ENCODE measurements at regions of chr10 and their contacts with region 1.

Region 1: DNA sequence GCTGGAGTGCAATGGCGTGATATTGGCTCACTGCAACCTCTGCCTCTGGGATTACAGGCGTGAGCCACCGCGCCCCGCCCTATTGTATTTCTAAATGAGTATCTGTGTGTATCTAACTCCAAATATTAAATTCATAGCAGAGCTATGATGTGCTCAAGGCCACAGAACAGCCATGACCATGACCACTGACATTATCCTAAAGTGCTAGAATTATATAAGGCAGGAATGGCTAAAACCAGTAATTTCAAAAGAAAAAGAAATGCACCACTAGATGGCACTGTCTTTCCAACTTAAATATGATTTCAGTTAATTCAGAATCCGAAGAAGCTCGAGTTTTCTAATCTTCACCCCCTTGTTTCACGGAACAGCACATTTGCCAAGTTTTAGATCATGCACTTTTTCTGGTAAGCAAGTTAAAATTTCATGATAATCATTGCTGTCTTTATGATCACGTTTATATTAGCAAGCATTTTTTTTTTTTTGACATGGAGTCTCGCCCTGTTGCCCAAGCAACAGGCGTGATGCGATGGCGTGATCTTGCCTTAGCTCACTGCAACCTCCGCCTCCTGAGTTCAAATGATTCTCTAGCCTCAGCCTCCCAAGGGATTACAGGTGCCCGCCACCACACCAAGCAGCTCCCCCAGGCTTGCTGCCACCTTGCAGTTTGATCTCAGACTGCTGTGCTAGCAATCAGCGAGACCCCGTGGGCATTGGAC is 65.3 kb downstream of the OR13A1 start:
- DNase-seq: peak in 3 of 4 experiments; percentile 13 to 75 (median 43)
- ATAC-seq: peak; percentile 83
- H3K4me3 ChIP-seq: peak overlapping the region; percentile 19; the same call in 1 of the 2 replicates
- H3K27ac ChIP-seq: no peak overlapping the region
- H3K4me1 ChIP-seq: peaks cover 0 to 5% of the 10 kb centered on the region in 2 experiments; a peak in 2 of 5 replicates
- H3K27me3 ChIP-seq: no peaks in the 10 kb centered on the region
- CTCF ChIP-seq: peak; percentile 36 to 77 (median 64); a peak in 5 of 6 replicates
- EP300 ChIP-seq: no peak
- POLR2A ChIP-seq: no peak
- RAD21 ChIP-seq: peak; percentile 83 to 86

Region 2: GRCh38 chr10:45308707-45309106 is 58.6 kb after region 1 on chr10:
- CTCF ChIA-PET with region 1: no interaction called
- POLR2A ChIA-PET with region 1: interaction called, 3 read pairs
- in situ Hi-C with region 1: no loop called
- intact Hi-C with region 1: loop called (anchors 2 kb)
- DNase-seq: peak in 2 of 4 experiments; percentile 41 to 70
- ATAC-seq: peak; percentile 93
- H3K4me3 ChIP-seq: no peak overlapping the region
- H3K27ac ChIP-seq: no peak overlapping the region
- H3K4me1 ChIP-seq: peaks cover 3 to 10% of the 10 kb centered on the region in 2 experiments; a peak in 4 of 5 replicates
- H3K27me3 ChIP-seq: no peaks in the 10 kb centered on the region
- CTCF ChIP-seq: peak; percentile 50 to 80 (median 68)
- EP300 ChIP-seq: no peak
- POLR2A ChIP-seq: no peak
- RAD21 ChIP-seq: peak; percentile 70 to 76

Region 3: GRCh38 chr10:45373576-45374349 is 123.6 kb after region 1 on chr10 and contains the start of gene ALOX5:
- CTCF ChIA-PET with region 1: no interaction called
- POLR2A ChIA-PET with region 1: interaction called, 3 read pairs
- in situ Hi-C with region 1: no loop called
- intact Hi-C with region 1: loop called (anchors 10 kb)
- DNase-seq: peak; percentile 89 to 97 (median 95)
- ATAC-seq: peak; percentile 92
- H3K4me3 ChIP-seq: peak within 1 kb of the TSS; percentile 40
- H3K27ac ChIP-seq: no peak within 1 kb of the TSS
- H3K4me1 ChIP-seq: peaks cover 30 to 34% of the 10 kb centered on the region in 2 experiments
- H3K27me3 ChIP-seq: peaks cover 0 to 14% of the 10 kb centered on the region in 2 experiments; a peak in 3 of 5 replicates
- CTCF ChIP-seq: no peak
- EP300 ChIP-seq: no peak
- POLR2A ChIP-seq: 0 out of 2 replicates have a peak, but pooled peaks have one; percentile 37
- RAD21 ChIP-seq: 0 out of 4 replicates have a peak, but pooled peaks of 1 of the 2 experiments have one; percentile 10
- polyA plus RNA-seq, gene ALOX5: 0.10 to 0.13 TPM

Region 4: GRCh38 chr10:45447416-45447815 is 197.3 kb after region 1 on chr10:
- CTCF ChIA-PET with region 1: no interaction called
- POLR2A ChIA-PET with region 1: no interaction called
- in situ Hi-C with region 1: no loop called
- intact Hi-C with region 1: no loop called
- DNase-seq: no peak
- ATAC-seq: no peak
- H3K4me3 ChIP-seq: no peak overlapping the region
- H3K27ac ChIP-seq: no peak overlapping the region
- H3K4me1 ChIP-seq: peaks cover 0 to 20% of the 10 kb centered on the region in 2 experiments; a peak in 2 of 5 replicates
- H3K27me3 ChIP-seq: no peaks in the 10 kb centered on the region; a peak in 1 of 5 replicates
- CTCF ChIP-seq: no peak
- EP300 ChIP-seq: no peak
- POLR2A ChIP-seq: no peak
- RAD21 ChIP-seq: no peak

Region 5: DNA sequence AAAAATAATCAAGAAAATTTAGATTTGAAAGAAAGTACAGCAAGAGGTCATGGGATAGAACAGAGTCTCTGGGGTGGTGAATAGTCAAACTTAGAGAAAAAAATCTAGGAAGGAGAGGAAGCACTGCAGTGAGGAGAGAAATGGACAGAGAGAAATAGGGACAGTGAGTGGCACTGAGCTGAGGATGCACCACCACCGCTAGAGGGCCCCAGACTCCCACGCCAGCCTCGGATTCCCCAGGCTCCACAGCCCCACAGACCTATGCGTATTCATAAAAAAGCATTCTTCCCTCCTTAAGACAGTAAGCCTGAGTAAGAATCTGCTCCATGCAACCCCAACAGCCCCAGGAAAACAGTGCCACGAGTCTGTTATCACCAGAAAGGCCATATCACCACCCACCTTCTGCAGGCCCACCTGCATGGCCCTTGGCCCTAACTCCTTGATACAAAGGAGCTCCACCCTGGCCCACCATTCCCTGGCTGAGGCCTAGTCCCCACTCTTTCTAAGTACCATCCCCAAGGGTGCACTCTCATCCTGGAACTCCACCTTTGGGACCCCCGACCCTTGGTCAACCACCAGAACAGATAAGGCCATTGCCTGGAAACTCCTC is 214.9 kb after region 1 on chr10:
- CTCF ChIA-PET with region 1: no interaction called
- POLR2A ChIA-PET with region 1: interaction called, 6 read pairs
- in situ Hi-C with region 1: loop called (anchors 5 kb)
- intact Hi-C with region 1: loop called (anchors 2 kb)
- DNase-seq: peak; percentile 86 to 90 (median 88)
- ATAC-seq: peak; percentile 99
- H3K4me3 ChIP-seq: no peak overlapping the region
- H3K27ac ChIP-seq: no peak overlapping the region
- H3K4me1 ChIP-seq: peaks cover 24 to 32% of the 10 kb centered on the region in 2 experiments
- H3K27me3 ChIP-seq: no peaks in the 10 kb centered on the region
- CTCF ChIP-seq: peak; percentile 95 to 99 (median 97)
- EP300 ChIP-seq: no peak
- POLR2A ChIP-seq: no peak
- RAD21 ChIP-seq: peak; percentile 98 to 99

Region 6: DNA sequence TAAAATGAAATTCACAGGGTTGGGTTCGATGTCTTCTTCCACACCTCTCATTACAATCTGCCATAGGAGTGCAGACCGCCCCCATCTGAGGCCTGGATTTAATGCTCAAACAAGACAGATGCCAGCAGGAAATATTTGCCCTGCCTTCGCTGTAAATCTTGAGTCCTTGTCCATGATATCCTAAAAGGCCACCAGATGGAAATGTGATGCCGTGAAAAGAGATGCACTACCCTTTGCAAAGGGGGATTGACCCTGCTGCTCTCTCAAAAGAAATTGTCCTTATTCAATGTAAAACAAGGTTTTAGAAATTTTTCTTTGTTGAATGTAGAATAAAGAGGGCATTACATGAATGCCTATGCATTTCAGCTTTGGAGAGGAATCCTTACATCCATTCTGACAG is 559.7 kb after region 1 on chr10:
- CTCF ChIA-PET with region 1: interaction called, 3 read pairs
- POLR2A ChIA-PET with region 1: no interaction called
- in situ Hi-C with region 1: no loop called
- intact Hi-C with region 1: loop called (anchors 10 kb)
- DNase-seq: peak in 2 of 4 experiments; percentile 17 to 26
- ATAC-seq: peak; percentile 67
- H3K4me3 ChIP-seq: no peak overlapping the region
- H3K27ac ChIP-seq: no peak overlapping the region
- H3K4me1 ChIP-seq: peaks cover 0 to 2% of the 10 kb centered on the region in 2 experiments; a peak in 2 of 5 replicates
- H3K27me3 ChIP-seq: no peaks in the 10 kb centered on the region
- CTCF ChIP-seq: peak; percentile 27 to 54 (median 36); a peak in 4 of 6 replicates
- EP300 ChIP-seq: no peak
- POLR2A ChIP-seq: no peak
- RAD21 ChIP-seq: peak; percentile 33 to 74; a peak in 3 of 4 replicates

Region 7: DNA sequence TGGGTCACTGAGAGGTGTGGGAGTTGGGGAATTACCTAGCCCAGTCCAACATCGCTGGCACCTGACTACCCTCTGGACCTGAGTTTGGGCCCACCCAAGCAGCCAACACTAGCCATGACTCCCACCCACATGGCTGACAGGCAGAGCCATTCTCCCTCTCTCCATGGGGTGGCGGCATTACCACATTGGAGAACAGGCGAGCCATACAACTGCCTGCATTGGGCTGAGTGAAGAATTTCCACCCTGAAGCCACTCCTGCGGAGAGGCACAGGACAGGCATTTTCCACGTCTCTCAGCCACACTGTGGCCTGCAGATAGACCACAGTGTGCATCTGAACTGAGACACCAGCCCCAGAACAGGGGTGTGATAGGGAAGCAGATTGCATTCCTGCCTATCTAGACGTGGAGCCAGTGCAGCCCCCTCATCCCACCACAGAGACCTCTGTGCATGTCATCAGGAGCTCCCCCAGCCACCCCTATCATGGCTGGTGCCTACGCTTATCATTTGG is 978.5 kb after region 1 on chr10:
- CTCF ChIA-PET with region 1: no interaction called
- POLR2A ChIA-PET with region 1: no interaction called
- in situ Hi-C with region 1: loop called (anchors 25 kb)
- intact Hi-C with region 1: no loop called
- DNase-seq: peak; percentile 77 to 83 (median 80)
- ATAC-seq: peak; percentile 96
- H3K4me3 ChIP-seq: no peak overlapping the region
- H3K27ac ChIP-seq: no peak overlapping the region
- H3K4me1 ChIP-seq: peaks cover 0 to 6% of the 10 kb centered on the region in 2 experiments; a peak in 2 of 5 replicates
- H3K27me3 ChIP-seq: peaks cover 0 to 14% of the 10 kb centered on the region in 2 experiments; a peak in 1 of 5 replicates
- CTCF ChIP-seq: peak; percentile 96 to 97 (median 97)
- EP300 ChIP-seq: no peak
- POLR2A ChIP-seq: no peak
- RAD21 ChIP-seq: peak; percentile 89 to 97

Measured in K562 (cell line).